ENCODE measurements at regions of chr17 and their contacts with region 1.

Region 1: DNA sequence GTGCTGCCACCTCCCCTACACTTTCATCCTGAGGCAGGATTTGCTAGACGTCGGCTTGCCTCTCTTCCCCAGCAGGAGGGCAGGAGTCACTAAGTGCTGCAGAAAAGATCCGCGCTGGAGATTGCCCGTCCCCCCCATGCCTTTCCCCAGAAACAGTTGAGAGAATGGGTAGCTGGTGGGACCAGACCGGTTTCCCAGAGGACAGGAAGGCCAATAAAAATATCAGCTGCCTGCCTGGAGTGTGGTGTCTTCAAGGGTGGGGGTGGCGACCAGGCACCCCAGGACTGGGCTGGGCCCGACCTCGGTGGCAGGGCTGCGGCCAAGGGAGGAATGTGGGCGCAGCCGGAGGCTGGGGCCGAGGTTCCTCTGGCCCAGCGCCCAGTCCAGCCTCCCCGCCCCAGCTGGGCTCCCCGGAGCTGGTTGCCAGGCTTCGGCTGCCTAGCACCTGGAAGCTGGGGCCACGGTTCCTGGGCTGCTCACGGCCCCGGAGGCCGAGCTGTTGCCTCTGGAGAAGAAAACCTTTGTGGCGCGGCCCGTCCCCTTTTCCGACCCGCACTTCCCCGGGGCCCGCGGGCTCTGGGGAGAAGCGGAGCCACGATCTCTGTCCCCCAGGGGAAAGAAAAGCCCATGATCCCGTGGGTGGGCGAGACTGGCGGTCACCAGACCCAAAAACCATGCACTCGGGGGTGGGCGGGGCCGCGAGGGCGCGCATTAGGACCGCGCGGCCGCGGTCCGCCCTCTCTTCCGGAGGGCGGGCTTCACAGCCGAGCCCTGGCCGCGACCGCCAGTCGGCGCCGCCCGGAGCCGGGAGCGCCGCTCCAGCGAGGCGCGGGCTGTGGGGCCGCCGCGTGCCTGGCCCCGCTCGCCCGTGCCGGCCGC is at the start of gene TRAF4:
- DNase-seq: peak; percentile 79
- ATAC-seq: peak; percentile 75
- H3K4me3 ChIP-seq: peak within 1 kb of the TSS; percentile 97 to 100
- H3K27ac ChIP-seq: peak within 1 kb of the TSS; percentile 98
- H3K4me1 ChIP-seq: peaks cover 34 to 50% of the 10 kb centered on the region in 2 experiments
- H3K27me3 ChIP-seq: no peaks in the 10 kb centered on the region
- CTCF ChIP-seq: 0 out of 6 replicates have a peak, but pooled peaks of 1 of the 3 experiments have one; percentile 1
- POLR2A ChIP-seq: peak; percentile 97
- RAD21 ChIP-seq: no peak
- total RNA-seq, gene TRAF4: 127 TPM

Region 2: GRCh38 chr17:28717578-28718333 is 25.7 kb before region 1 on chr17 and contains the start of gene RAB34:
- CTCF ChIA-PET with region 1: no interaction called
- POLR2A ChIA-PET with region 1: interaction called, 13 read pairs
- RAD21 ChIA-PET with region 1: no interaction called
- intact Hi-C with region 1: no loop called
- DNase-seq: no peak
- ATAC-seq: no peak
- H3K4me3 ChIP-seq: peak within 1 kb of the TSS; percentile 98 to 99; a peak in 3 of 4 replicates
- H3K27ac ChIP-seq: peak within 1 kb of the TSS; percentile 89
- H3K4me1 ChIP-seq: peaks cover 22 to 32% of the 10 kb centered on the region in 2 experiments
- H3K27me3 ChIP-seq: no peaks in the 10 kb centered on the region
- CTCF ChIP-seq: no peak
- POLR2A ChIP-seq: peak; percentile 67
- RAD21 ChIP-seq: no peak
- total RNA-seq, gene RAB34: 0.59 TPM

Measured in HCT116 (cell line).